ENCODE measurements at regions of chr5 and their contacts with region 1.

Region 1: GRCh38 chr5:136212252-136212721 is 19.3 kb upstream of the SMIM32 start:
- DNase-seq: peak; percentile 39 to 72
- ATAC-seq: peak; percentile 86

Region 2: DNA sequence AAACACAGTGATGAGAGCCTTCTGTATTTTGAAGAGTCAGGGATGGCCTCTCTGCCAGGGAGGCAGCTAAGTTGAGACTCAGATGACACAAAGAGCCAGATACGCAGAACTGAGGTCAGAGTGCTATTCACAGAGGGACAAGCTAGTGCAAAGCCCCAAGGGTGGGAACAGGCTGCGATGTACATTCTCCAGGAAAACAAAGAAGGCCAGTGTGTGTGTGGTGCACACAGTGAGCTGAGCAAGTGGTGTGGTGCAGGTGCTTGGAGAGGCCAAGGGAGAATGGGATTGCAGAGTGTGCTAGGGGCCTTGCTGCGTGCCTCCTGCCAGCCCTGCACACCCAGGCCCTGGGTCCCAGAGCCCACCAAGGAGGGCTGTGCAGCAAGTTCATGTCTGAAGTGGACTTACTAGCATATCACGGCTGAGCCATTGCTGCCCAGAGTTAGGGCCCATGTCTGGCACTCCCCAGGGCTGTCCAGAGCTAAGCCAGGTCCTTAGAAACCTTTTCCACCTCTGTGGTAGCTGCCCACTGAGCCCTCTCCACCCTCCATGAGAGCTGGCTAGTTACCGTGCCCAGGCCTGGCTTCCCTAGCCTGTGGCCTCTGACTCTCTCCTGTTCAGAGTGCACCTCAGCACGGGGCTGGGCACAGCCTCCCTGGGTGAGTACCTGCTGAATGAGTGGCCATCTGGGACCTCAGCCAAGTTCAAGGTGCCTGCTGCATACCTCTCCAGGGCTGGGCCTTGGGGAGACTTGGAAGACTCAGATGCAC is 368.5 kb before region 1 on chr5:
- intact Hi-C with region 1: no loop called
- DNase-seq: peak; percentile 74 to 87
- ATAC-seq: peak; percentile 96

Region 3: DNA sequence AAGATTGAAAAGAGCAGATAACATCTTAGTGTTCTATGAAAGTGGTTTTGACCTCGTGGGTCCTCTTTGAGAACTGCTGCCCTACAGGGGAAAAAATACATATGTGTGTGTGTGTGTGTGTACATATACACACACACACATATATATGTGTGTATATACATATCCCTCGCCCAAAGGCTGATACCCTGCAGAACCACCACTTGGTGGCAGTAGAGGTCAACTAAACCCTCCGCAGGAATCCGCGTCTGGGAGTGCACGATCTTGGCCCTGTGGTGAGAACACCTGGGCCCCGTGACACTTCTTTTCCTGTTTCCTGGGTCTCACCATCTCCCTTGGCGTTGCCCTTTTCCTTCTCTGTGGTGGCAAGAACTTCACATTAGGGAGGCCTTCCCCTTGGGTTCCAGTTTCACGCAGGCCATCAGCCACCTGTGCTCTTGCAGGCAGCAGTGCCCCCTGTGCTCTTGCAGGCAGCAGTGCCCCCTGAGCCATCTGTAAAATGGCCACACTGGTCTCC is 324.9 kb before region 1 on chr5:
- intact Hi-C with region 1: loop called (anchors 5 to 10 kb)
- DNase-seq: peak; percentile 51 to 64
- ATAC-seq: peak; percentile 99

Region 4: GRCh38 chr5:136020383-136021015 is 191.8 kb before region 1 on chr5:
- intact Hi-C with region 1: no loop called
- DNase-seq: no peak
- ATAC-seq: no peak

Measured in left colon (tissue), 2 donors.